HepG2 (cell line): ENCODE measurements at regions of chr4 and their contacts with region 1.

Region 1: GRCh38 chr4:96646146-96646545 is 806.3 kb downstream of the PDHA2 start:
- DNase-seq: no peak
- ATAC-seq: no peak
- H3K4me3 ChIP-seq: no peak overlapping the region
- H3K27ac ChIP-seq: no peak overlapping the region
- H3K4me1 ChIP-seq: no peaks in the 10 kb centered on the region
- H3K27me3 ChIP-seq: no peaks in the 10 kb centered on the region
- CTCF ChIP-seq: no peak
- EP300 ChIP-seq: no peak
- POLR2A ChIP-seq: no peak
- RAD21 ChIP-seq: no peak

Region 2: GRCh38 chr4:96585304-96585703 is 60.8 kb before region 1 on chr4:
- CTCF ChIA-PET with region 1: no interaction called
- POLR2A ChIA-PET with region 1: no interaction called
- in situ Hi-C with region 1: no loop called
- intact Hi-C with region 1: no loop called
- DNase-seq: no peak
- ATAC-seq: no peak
- H3K4me3 ChIP-seq: no peak overlapping the region
- H3K27ac ChIP-seq: no peak overlapping the region
- H3K4me1 ChIP-seq: no peaks in the 10 kb centered on the region
- H3K27me3 ChIP-seq: no peaks in the 10 kb centered on the region
- CTCF ChIP-seq: no peak
- EP300 ChIP-seq: no peak
- POLR2A ChIP-seq: no peak
- RAD21 ChIP-seq: no peak

Region 3: GRCh38 chr4:96603641-96604040 is 42.5 kb before region 1 on chr4:
- CTCF ChIA-PET with region 1: no interaction called
- POLR2A ChIA-PET with region 1: no interaction called
- in situ Hi-C with region 1: no loop called
- intact Hi-C with region 1: loop called (anchors 1 kb)
- DNase-seq: no peak
- ATAC-seq: no peak
- H3K4me3 ChIP-seq: no peak overlapping the region
- H3K27ac ChIP-seq: no peak overlapping the region
- H3K4me1 ChIP-seq: no peaks in the 10 kb centered on the region
- H3K27me3 ChIP-seq: no peaks in the 10 kb centered on the region
- CTCF ChIP-seq: no peak
- EP300 ChIP-seq: no peak
- POLR2A ChIP-seq: no peak
- RAD21 ChIP-seq: no peak